Naive thymus-derived CD4-positive, alpha-beta T cell (primary cell): ENCODE measurements at regions of chr4 and their contacts with region 1.

Region 1: GRCh38 chr4:38730830-38731646 is 51.8 kb downstream of the TLR10 start:
- DNase-seq: peak; percentile 63 to 86 (median 77)
- ATAC-seq: peak; percentile 88
- H3K4me3 ChIP-seq: no peak overlapping the region
- H3K4me3 Mint-ChIP-seq: no peak overlapping the region
- H3K27ac ChIP-seq: no peak overlapping the region
- H3K27ac Mint-ChIP-seq: peak overlapping the region in 2 of 9 donors; percentile 25 to 31
- H3K4me1 ChIP-seq: peaks cover 0 to 7% of the 10 kb centered on the region in 2 donors
- H3K4me1 Mint-ChIP-seq: peaks cover 7 to 20% (median 16%) of the 10 kb centered on the region in 7 donors
- H3K27me3 ChIP-seq: no peaks in the 10 kb centered on the region
- H3K27me3 Mint-ChIP-seq: peaks cover 0 to 12% (median 0%) of the 10 kb centered on the region in 5 donors

Region 2: DNA sequence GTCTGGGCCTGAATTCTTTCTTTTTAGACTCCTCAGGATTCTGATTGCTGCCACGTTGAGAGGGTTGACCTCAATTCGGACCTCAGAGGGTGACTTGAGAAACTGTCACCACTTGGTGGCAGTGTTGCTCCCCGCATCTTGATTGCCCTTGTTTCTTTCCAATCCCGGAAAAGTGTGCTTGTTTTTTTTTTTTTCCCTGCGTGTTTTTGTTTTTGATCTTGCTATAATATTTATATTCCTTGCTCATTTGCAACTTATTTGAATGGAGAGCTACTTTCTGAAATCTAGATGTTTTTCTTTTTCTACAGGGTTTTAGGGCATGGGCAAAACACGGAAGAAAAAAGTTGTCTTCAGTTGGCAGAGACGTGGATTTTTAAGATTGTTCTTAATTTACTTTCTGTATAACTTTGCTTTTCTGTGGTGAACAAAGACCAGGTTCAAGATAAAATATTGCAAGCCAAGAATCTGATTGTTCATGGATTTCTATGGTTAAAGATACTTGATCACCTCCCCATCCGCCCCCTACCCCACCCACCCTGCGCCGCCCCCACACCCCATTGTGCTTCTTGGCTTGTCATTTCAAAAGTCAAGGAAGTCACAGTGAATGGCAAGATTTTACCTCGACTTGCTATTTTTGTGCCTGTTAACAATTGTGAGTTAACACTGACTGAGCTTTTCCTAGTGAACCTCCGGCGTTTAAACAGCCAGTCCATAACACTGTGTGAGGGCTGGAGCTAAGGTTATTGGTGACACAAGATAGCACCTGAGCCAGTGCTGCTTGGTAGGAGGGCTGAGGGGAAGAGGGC is 668.7 kb before region 1 on chr4:
- CTCF ChIA-PET with region 1: interaction called, 5 read pairs
- POLR2A ChIA-PET with region 1: no interaction called
- intact Hi-C with region 1: loop called (anchors 1 kb)
- DNase-seq: peak; percentile 15 to 55 (median 41)
- ATAC-seq: peak; percentile 78
- H3K4me3 ChIP-seq: peak overlapping the region; percentile 33
- H3K4me3 Mint-ChIP-seq: peak overlapping the region; percentile 66 to 95 (median 84)
- H3K27ac ChIP-seq: no peak overlapping the region
- H3K27ac Mint-ChIP-seq: peak overlapping the region in 8 of 9 donors; percentile 35 to 80 (median 61)
- H3K4me1 ChIP-seq: no peaks in the 10 kb centered on the region
- H3K4me1 Mint-ChIP-seq: peaks cover 0 to 20% (median 10%) of the 10 kb centered on the region in 7 donors
- H3K27me3 ChIP-seq: no peaks in the 10 kb centered on the region
- H3K27me3 Mint-ChIP-seq: no peaks in the 10 kb centered on the region

Region 3: DNA sequence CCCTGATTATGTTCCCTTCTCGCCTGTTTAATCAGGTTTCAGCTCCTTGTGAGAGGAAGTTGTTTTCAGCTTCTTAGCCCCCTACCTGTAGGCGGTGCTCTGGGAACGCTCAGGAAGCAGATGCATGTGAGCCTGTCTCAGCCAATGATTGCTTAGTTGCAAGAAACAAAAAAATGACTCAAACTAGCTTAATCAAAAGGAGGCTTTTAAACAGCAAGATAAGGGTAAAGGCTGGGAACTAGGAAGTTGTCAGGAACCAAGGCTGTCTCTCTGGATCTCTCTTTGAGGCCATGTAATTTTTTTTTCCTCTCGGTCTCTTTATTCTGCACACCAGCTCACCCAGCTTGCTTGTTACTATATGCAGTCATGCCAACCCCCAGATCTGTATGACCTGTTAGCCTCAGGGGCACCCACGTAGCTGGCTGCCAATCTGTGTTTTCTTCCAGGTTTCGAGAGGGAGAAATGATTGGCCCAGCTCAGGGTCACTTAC is 661.7 kb before region 1 on chr4:
- CTCF ChIA-PET with region 1: interaction called, 12 read pairs
- POLR2A ChIA-PET with region 1: no interaction called
- intact Hi-C with region 1: no loop called
- DNase-seq: peak in 6 of 9 donors; percentile 16 to 53 (median 38)
- ATAC-seq: peak; percentile 86
- H3K4me3 ChIP-seq: no peak overlapping the region
- H3K4me3 Mint-ChIP-seq: no peak overlapping the region
- H3K27ac ChIP-seq: no peak overlapping the region
- H3K27ac Mint-ChIP-seq: peak overlapping the region in 1 of 9 donors; percentile 12
- H3K4me1 ChIP-seq: no peaks in the 10 kb centered on the region
- H3K4me1 Mint-ChIP-seq: peaks cover 9 to 29% (median 18%) of the 10 kb centered on the region in 7 donors
- H3K27me3 ChIP-seq: no peaks in the 10 kb centered on the region
- H3K27me3 Mint-ChIP-seq: no peaks in the 10 kb centered on the region

Region 4: GRCh38 chr4:38194047-38194602 is 536.9 kb before region 1 on chr4:
- CTCF ChIA-PET with region 1: no interaction called
- POLR2A ChIA-PET with region 1: no interaction called
- intact Hi-C with region 1: no loop called
- DNase-seq: no peak
- ATAC-seq: no peak
- H3K4me3 ChIP-seq: no peak overlapping the region
- H3K4me3 Mint-ChIP-seq: no peak overlapping the region
- H3K27ac ChIP-seq: no peak overlapping the region
- H3K27ac Mint-ChIP-seq: no peak overlapping the region
- H3K4me1 ChIP-seq: no peaks in the 10 kb centered on the region
- H3K4me1 Mint-ChIP-seq: peaks cover 0 to 2% (median 0%) of the 10 kb centered on the region in 7 donors
- H3K27me3 ChIP-seq: no peaks in the 10 kb centered on the region
- H3K27me3 Mint-ChIP-seq: peaks cover 0 to 37% (median 0%) of the 10 kb centered on the region in 5 donors

Region 5: GRCh38 chr4:38319456-38320342 is 411.3 kb before region 1 on chr4:
- CTCF ChIA-PET with region 1: interaction called, 6 read pairs
- POLR2A ChIA-PET with region 1: no interaction called
- intact Hi-C with region 1: loop called (anchors 1 kb)
- DNase-seq: peak; percentile 73 to 96 (median 83)
- ATAC-seq: peak; percentile 91
- H3K4me3 ChIP-seq: peak overlapping the region; percentile 38
- H3K4me3 Mint-ChIP-seq: peak overlapping the region; percentile 80 to 95 (median 88)
- H3K27ac ChIP-seq: peak overlapping the region; percentile 68
- H3K27ac Mint-ChIP-seq: peak overlapping the region; percentile 87 to 98 (median 94)
- H3K4me1 ChIP-seq: peaks cover 19 to 35% of the 10 kb centered on the region in 2 donors
- H3K4me1 Mint-ChIP-seq: peaks cover 33 to 75% (median 70%) of the 10 kb centered on the region in 7 donors
- H3K27me3 ChIP-seq: no peaks in the 10 kb centered on the region
- H3K27me3 Mint-ChIP-seq: peaks cover 0 to 10% (median 0%) of the 10 kb centered on the region in 5 donors